Endothelial cell of umbilical vein (primary cell): ENCODE measurements at regions of chr21 and their contacts with region 1.

Region 1: GRCh38 chr21:23016405-23017016 is 2018.3 kb downstream of the NCAM2 start:
- DNase-seq: peak; percentile 83
- H3K4me3 ChIP-seq: no peak overlapping the region
- H3K27ac ChIP-seq: peak overlapping the region; percentile 98
- H3K4me1 ChIP-seq: peaks cover 36% of the 10 kb centered on the region
- H3K27me3 ChIP-seq: no peaks in the 10 kb centered on the region
- CTCF ChIP-seq: peak; percentile 59 to 65
- POLR2A ChIP-seq: no peak

Region 2: GRCh38 chr21:21163904-21164303 is 1852.6 kb before region 1 on chr21:
- CTCF ChIA-PET with region 1: no interaction called
- POLR2A ChIA-PET with region 1: no interaction called
- dilution Hi-C with region 1: no loop called
- intact Hi-C with region 1: loop called (anchors 5 kb)
- DNase-seq: peak; percentile 52
- H3K4me3 ChIP-seq: no peak overlapping the region
- H3K27ac ChIP-seq: no peak overlapping the region
- H3K4me1 ChIP-seq: no peaks in the 10 kb centered on the region
- H3K27me3 ChIP-seq: no peaks in the 10 kb centered on the region
- CTCF ChIP-seq: peak; percentile 44
- POLR2A ChIP-seq: no peak

Region 3: GRCh38 chr21:22575165-22575584 is 441.3 kb before region 1 on chr21:
- CTCF ChIA-PET with region 1: interaction called, 8 read pairs
- POLR2A ChIA-PET with region 1: no interaction called
- dilution Hi-C with region 1: no loop called
- intact Hi-C with region 1: loop called (anchors 1 kb)
- DNase-seq: peak; percentile 93
- H3K4me3 ChIP-seq: no peak overlapping the region
- H3K27ac ChIP-seq: no peak overlapping the region
- H3K4me1 ChIP-seq: peaks cover 3% of the 10 kb centered on the region
- H3K27me3 ChIP-seq: no peaks in the 10 kb centered on the region
- CTCF ChIP-seq: peak; percentile 49 to 51
- POLR2A ChIP-seq: no peak

Region 4: DNA sequence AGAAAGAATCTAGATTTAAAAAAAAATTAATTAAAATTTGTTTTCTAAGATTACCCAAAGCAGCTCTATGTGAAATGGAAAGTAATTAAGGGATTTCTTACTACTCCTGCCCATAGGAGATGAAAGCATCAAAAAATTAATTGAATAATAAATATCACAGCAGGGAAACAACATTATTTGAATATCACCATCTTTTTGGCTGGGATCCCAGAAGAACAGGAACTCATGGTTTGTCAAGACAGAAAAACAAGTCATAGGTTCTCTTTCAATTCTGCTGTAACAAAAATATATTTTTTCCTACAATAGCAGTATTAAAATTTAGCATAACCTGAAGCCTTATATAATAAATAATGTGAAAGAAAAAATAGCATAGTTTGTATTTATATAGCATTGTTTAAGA is 304.9 kb before region 1 on chr21:
- CTCF ChIA-PET with region 1: no interaction called
- POLR2A ChIA-PET with region 1: no interaction called
- dilution Hi-C with region 1: no loop called
- intact Hi-C with region 1: loop called (anchors 5 kb)
- DNase-seq: peak; percentile 83
- H3K4me3 ChIP-seq: no peak overlapping the region
- H3K27ac ChIP-seq: peak overlapping the region; percentile 73
- H3K4me1 ChIP-seq: peaks cover 30% of the 10 kb centered on the region
- H3K27me3 ChIP-seq: no peaks in the 10 kb centered on the region
- CTCF ChIP-seq: no peak
- POLR2A ChIP-seq: no peak

Region 5: DNA sequence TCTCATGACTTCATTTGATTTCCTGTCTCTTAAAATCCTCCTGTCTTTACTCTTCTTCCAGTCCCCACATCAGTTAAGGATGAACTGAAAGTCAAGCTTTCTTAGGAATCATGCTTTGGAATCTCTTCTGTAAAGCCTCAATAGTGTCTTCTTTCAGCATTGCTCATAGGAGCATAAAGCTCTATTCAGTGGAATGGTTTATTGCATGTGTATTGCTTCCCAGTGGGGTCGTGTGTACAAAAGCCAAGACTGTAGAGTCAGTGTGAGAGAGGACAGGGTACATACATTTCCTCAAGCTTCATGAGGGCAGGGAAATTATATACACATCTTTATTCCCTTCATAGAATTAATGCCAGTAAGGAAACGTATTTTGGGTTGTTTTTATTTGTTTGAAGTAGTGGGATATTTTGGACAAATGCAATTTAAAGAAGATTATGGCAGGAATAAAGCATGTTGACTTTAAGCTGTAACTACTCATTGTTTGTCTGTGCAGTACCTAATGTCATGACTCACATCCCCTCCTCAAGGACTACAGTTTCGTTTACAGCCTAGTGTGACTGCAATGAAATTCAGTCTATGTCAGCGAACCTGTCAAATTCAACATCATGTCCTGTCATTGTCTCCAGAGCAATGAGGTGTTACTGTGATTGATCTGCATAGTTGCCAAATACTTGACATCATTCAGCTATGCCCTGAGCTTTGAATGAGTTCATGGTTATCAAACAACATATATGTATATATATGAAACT is 145.9 kb after region 1 on chr21:
- CTCF ChIA-PET with region 1: interaction called, 5 read pairs
- POLR2A ChIA-PET with region 1: no interaction called
- dilution Hi-C with region 1: no loop called
- intact Hi-C with region 1: loop called (anchors 10 kb)
- DNase-seq: peak; percentile 94
- H3K4me3 ChIP-seq: no peak overlapping the region
- H3K27ac ChIP-seq: peak overlapping the region; percentile 89
- H3K4me1 ChIP-seq: peaks cover 18% of the 10 kb centered on the region
- H3K27me3 ChIP-seq: no peaks in the 10 kb centered on the region
- CTCF ChIP-seq: no peak
- POLR2A ChIP-seq: no peak

Region 6: GRCh38 chr21:23401278-23401677 is 384.8 kb after region 1 on chr21:
- CTCF ChIA-PET with region 1: interaction called, 3 read pairs
- POLR2A ChIA-PET with region 1: no interaction called
- dilution Hi-C with region 1: no loop called
- intact Hi-C with region 1: loop called (anchors 2 kb)
- DNase-seq: peak; percentile 51
- H3K4me3 ChIP-seq: no peak overlapping the region
- H3K27ac ChIP-seq: no peak overlapping the region
- H3K4me1 ChIP-seq: no peaks in the 10 kb centered on the region
- H3K27me3 ChIP-seq: no peaks in the 10 kb centered on the region
- CTCF ChIP-seq: peak; percentile 28 to 32
- POLR2A ChIP-seq: no peak